IMR-90 (cell line): ENCODE measurements at regions of chr6 and their contacts with region 1.

Region 1: DNA sequence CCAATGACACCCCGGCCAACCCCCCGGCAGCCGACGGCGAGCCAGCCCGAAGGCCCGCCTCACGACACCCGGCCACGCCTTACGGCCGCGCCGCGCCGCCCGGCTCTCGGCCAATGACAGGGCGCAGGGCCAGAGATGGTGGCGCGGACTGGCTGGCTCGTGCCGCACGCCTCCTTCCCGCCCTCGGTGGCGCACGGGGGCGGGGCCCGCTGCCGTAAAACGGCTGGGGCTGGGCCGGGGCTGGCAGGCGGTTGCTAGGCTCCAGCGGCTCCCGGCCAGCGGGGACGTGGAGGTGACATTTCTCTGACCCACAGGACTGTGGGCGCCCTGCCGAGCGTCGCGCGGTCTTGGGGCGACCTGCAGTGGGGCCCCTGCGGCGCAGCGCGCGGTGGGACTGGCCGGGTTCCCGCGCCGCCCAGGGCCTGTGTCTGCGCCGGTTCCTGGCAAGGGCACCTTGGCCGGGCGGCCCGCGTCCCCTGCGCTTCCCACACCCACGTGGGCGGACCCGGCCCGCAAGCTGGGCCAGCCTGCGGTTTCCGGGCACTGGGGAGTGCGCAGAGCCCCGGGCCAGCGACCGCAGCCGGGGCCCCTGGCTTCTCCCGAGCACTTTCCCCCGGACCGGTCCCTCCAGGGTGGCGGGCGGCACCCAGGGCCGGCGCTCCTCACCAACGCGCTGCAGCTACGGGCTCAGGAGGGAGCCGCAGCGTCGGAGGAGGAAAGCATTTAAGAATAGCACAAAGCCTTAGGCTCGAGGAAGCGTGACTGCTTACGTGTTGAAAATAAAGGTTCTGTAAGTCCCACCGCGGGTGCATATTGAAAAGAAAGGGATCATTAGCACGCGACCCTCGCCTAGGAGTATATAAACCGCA is at the start of gene MPC1:
- DNase-seq: peak; percentile 92
- ATAC-seq: peak; percentile 99
- H3K4me3 ChIP-seq: peak within 1 kb of the TSS; percentile 87
- H3K27ac ChIP-seq: peak within 1 kb of the TSS; percentile 17
- H3K4me1 ChIP-seq: no peaks in the 10 kb centered on the region
- H3K27me3 ChIP-seq: no peaks in the 10 kb centered on the region; the same call in 1 of the 2 replicates
- CTCF ChIP-seq: no peak
- POLR2A ChIP-seq: no peak
- RAD21 ChIP-seq: no peak
- total RNA-seq, gene MPC1: 10.9 and 16.1 TPM in 2 replicates

Region 2: DNA sequence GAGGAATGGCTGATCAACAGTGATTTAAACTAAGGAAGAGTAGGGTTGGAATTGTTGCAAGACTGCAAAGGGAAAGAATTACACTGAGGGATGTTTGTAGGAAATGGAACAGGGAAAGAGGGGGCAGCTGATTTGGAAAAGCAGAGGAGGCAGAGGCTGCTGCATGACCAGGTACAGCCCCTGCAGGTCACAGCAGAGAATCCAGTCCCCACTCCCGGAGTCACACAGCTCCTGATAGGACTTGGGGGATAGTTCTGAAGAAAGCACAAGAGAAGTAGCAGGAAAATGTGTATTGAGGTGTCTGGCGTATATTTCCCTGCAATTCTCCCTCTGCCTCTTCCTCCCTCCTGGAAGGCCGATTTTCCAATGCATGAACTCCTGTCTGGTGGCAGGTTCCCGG is 627.6 kb before region 1 on chr6:
- CTCF ChIA-PET with region 1: no interaction called
- POLR2A ChIA-PET with region 1: no interaction called
- dilution Hi-C with region 1: no loop called
- in situ Hi-C with region 1: no loop called
- intact Hi-C with region 1: no loop called
- DNase-seq: no peak
- ATAC-seq: no peak
- H3K4me3 ChIP-seq: no peak overlapping the region
- H3K27ac ChIP-seq: no peak overlapping the region
- H3K4me1 ChIP-seq: no peaks in the 10 kb centered on the region
- H3K27me3 ChIP-seq: no peaks in the 10 kb centered on the region; the same call in 1 of the 2 replicates
- CTCF ChIP-seq: no peak
- POLR2A ChIP-seq: no peak
- RAD21 ChIP-seq: no peak

Region 3: DNA sequence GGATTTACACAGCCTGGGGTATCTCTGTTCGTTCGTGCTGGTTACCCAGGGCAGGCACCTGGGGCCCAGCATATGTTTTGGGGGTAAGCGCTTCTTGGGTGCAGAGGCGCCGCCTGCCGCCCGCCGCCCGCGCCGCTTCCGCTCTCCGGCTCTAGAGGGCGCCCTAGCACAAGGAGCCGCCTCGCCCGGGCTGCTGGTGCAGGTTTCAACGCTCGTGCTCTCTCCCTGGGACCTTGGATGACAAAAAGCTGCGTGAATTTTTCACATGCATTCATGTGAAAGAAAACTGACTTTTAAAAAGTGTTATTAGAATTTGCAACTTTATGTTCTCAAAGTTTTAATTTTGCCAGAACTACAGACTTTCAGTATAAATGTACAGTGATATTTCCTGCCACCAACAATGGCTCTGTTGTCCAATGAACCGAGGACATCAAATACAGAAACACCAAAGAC is 107.4 kb before region 1 on chr6:
- CTCF ChIA-PET with region 1: interaction called, 3 read pairs
- POLR2A ChIA-PET with region 1: no interaction called
- dilution Hi-C with region 1: no loop called
- in situ Hi-C with region 1: no loop called
- intact Hi-C with region 1: loop called (anchors 5 kb)
- DNase-seq: peak; percentile 15
- ATAC-seq: peak; percentile 97
- H3K4me3 ChIP-seq: no peak overlapping the region
- H3K27ac ChIP-seq: no peak overlapping the region
- H3K4me1 ChIP-seq: no peaks in the 10 kb centered on the region
- H3K27me3 ChIP-seq: peaks cover 10% of the 10 kb centered on the region; the same call in 1 of the 2 replicates
- CTCF ChIP-seq: peak; percentile 98
- POLR2A ChIP-seq: no peak
- RAD21 ChIP-seq: peak; percentile 89

Region 4: DNA sequence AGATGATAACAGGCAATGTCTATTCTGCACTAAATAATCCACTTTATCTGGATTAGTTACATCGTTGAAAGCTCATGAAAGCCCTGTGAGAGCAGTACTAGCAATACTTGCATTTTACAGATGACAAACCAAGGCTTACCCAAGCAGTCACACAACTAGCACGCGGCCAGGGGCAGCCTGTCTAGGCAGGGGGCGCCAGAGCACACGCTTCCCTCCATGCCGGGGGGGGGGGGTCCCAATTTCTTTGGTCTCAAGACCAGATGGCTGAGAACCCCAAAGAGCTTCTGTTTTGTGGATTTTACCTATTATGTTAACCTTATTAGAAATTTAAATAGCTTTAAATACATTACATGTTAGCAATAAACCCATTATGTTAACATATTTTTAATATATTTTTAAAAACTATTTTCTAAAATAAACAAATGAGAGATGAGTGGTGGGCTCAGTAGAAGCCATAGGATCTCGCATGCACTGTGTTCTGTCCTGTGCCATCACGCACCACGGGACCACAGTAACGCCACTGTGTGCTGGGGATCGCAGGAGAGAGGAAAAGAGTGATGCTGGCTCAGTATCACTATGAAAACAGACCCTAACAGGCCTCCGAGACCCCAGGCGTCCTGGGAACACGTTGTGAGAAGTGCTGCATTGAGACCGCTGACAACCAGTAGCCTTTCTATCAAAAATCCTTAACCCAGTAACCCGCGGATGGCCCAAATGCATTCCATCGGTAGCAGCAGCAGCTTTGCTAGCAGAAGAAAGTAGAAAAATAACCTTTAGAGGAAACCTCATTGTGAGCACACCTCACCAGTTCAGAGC is 69.7 kb before region 1 on chr6:
- CTCF ChIA-PET with region 1: interaction called, 4 read pairs
- POLR2A ChIA-PET with region 1: no interaction called
- dilution Hi-C with region 1: no loop called
- in situ Hi-C with region 1: no loop called
- intact Hi-C with region 1: loop called (anchors 1 kb)
- DNase-seq: peak; percentile 45
- ATAC-seq: peak; percentile 77
- H3K4me3 ChIP-seq: no peak overlapping the region
- H3K27ac ChIP-seq: no peak overlapping the region
- H3K4me1 ChIP-seq: no peaks in the 10 kb centered on the region; the same call in 1 of the 2 replicates
- H3K27me3 ChIP-seq: peaks cover 21% of the 10 kb centered on the region
- CTCF ChIP-seq: peak; percentile 63
- POLR2A ChIP-seq: no peak
- RAD21 ChIP-seq: peak; percentile 62

Region 5: DNA sequence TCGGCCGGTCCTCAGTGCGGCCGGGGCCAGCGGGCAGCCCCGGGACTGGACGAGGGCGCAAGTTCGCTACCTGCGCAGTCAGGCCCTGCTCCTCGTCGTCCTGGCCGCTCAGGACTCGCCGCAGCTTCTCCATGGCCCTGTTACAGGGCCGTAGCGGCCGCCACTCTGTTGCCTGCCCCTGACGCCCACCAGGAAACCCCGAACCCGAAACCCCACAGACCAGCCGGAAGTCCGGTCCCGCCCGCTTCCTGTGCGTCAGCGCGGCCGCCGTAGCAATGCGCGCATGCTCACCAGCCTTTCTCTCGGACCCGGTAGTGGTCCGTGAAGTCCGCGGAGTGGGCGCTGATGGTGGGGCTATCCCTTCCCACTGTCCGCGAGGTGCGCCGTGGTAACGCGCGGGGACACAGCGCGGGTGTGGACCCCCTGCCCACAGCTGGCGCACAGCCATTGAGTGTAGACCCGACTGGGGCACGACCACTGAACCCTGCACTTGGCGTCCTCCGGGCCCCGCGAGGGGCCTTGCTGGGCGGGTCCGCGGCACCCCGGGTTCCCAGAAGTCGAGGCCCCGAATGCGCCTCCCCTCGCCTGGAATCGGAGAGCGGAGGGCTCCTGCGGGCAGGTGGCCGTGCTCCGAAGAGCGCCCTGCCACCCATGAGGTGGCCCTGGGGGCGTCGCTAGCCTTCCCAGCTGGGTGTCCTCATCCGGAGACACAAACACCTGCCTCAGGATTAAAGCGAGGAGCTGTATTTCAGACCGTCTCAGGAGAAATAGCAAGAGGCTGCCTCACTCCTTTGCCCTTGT is 40.6 kb before region 1 on chr6 and contains the start of gene SFT2D1:
- CTCF ChIA-PET with region 1: no interaction called
- POLR2A ChIA-PET with region 1: no interaction called
- dilution Hi-C with region 1: no loop called
- in situ Hi-C with region 1: no loop called
- intact Hi-C with region 1: loop called (anchors 2 kb)
- DNase-seq: peak; percentile 83
- ATAC-seq: peak; percentile 98
- H3K4me3 ChIP-seq: peak within 1 kb of the TSS; percentile 82
- H3K27ac ChIP-seq: peak within 1 kb of the TSS; percentile 91
- H3K4me1 ChIP-seq: no peaks in the 10 kb centered on the region; the same call in 1 of the 2 replicates
- H3K27me3 ChIP-seq: no peaks in the 10 kb centered on the region; the same call in 1 of the 2 replicates
- CTCF ChIP-seq: no peak
- POLR2A ChIP-seq: peak; percentile 85
- RAD21 ChIP-seq: no peak
- total RNA-seq, gene SFT2D1: 10.2 and 31.9 TPM in 2 replicates